Calu3 (cell line): ENCODE measurements at regions of chr12 and their contacts with region 1.

Region 1: GRCh38 chr12:126051611-126052107 is 986.4 kb downstream of the AACS start:
- DNase-seq: peak; percentile 74
- H3K4me3 Mint-ChIP-seq: peak overlapping the region; percentile 75
- H3K27ac Mint-ChIP-seq: peak overlapping the region; percentile 91
- H3K4me1 Mint-ChIP-seq: peaks cover 67% of the 10 kb centered on the region
- H3K27me3 Mint-ChIP-seq: no peaks in the 10 kb centered on the region
- CTCF ChIP-seq: peak; percentile 41

Region 2: DNA sequence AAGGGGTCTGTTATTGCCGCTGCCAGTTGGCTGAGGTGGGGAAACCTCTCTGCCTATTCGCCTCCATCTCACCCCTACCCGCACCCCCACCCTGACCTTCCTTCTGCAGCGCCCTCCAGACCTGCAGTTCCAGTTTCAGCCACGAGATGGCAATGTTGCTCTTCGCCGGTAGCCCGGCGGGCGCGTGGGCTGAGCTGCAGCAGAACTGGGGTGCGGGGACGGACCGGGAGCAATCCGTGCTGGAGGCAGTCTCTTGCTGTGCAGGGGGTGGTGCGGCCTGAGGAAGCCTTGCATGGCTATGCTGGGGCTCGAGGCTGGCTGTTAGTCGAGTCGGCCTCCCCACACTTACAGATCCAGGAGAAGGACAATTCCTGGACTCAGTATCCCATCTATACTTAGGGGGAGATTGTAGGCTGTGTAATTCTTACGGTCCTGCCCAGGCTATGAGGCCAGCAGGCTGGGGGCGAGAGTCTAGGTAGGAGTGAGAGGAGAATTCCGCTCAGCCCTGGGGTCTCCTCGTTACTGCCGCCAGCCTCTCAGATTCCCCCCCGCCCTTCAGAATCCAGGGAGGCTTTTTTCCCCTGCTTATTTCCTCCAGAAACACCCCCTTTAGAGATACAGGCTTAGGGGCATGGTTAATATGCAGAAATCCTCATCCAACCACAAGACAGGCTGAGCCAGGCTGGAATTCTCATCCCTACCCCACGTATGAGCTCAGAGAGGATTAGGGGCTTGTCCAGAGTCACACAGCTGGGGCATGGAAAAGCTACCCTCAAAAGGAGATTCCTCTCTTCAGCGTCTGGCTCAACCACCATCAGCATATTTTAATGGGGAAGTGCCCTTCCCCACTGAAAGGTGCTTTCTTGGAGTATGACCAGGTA is 868.2 kb before region 1 on chr12:
- CTCF ChIA-PET with region 1: interaction called, 6 read pairs
- intact Hi-C with region 1: loop called (anchors 10 kb)
- DNase-seq: peak; percentile 92
- H3K4me3 Mint-ChIP-seq: peak overlapping the region; percentile 25
- H3K27ac Mint-ChIP-seq: no peak overlapping the region
- H3K4me1 Mint-ChIP-seq: peaks cover 18% of the 10 kb centered on the region
- H3K27me3 Mint-ChIP-seq: peaks cover 55% of the 10 kb centered on the region
- CTCF ChIP-seq: peak; percentile 99

Region 3: GRCh38 chr12:125240717-125241116 is 810.9 kb before region 1 on chr12:
- CTCF ChIA-PET with region 1: no interaction called
- intact Hi-C with region 1: loop called (anchors 5 kb)
- DNase-seq: no peak
- H3K4me3 Mint-ChIP-seq: no peak overlapping the region
- H3K27ac Mint-ChIP-seq: no peak overlapping the region
- H3K4me1 Mint-ChIP-seq: no peaks in the 10 kb centered on the region
- H3K27me3 Mint-ChIP-seq: peaks cover 63% of the 10 kb centered on the region
- CTCF ChIP-seq: no peak

Region 4: DNA sequence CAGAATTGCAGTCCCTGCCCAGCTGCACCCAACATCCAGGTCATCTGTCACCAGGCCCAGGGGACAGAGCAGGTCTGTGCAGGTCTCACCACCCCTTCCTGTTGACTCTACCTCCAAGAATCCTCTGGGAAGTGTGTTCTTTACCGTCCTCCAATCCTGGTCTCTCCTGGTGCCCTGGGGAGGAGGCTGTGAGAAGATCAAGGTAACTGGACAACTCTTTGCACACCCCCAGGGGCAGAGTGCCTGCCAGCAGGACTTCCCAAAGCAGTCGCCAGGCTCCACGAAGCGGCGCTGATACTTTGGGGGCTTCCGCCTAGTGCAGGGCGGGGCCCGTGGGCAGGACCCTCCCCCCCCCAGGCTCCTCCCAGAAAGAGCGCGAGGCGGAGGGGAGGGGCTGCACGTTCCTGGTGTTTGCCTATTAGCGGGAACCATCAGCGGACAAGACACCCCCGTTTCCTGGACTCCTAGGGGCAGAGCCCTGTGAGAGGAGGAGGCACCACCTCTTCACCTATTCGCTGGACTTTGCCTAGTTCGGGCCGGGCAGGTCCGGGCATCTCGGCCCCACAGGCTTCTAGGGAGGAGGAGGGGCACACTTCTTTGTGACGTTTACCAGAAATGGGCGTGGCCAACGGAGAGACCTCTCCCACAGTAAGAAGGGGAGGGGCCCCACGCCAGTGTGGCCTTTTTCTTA is 68.4 kb before region 1 on chr12:
- CTCF ChIA-PET with region 1: interaction called, 4 read pairs
- intact Hi-C with region 1: loop called (anchors 1 kb)
- DNase-seq: peak; percentile 93
- H3K4me3 Mint-ChIP-seq: peak overlapping the region; percentile 87
- H3K27ac Mint-ChIP-seq: peak overlapping the region; percentile 84
- H3K4me1 Mint-ChIP-seq: peaks cover 21% of the 10 kb centered on the region
- H3K27me3 Mint-ChIP-seq: no peaks in the 10 kb centered on the region
- CTCF ChIP-seq: no peak

Region 5: DNA sequence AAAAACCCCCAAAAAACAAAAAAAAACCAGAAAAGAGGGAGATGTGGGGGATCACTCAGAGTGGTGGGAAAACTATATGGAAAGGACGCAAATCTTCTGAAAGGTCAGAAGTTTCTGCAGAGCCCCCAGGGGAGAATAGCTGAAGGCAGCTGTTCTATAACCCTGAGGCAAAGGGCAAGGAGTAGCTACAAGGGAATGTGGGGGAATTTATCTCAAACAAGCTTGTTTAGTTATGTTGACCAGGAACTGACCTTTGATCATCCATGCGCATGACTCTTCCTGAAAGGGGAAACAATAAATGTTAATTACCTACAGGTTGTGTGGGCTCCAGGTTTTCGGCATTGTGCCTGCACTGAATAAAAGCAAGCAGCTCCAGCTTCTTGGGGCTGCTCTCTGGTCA is 17.9 kb before region 1 on chr12:
- CTCF ChIA-PET with region 1: interaction called, 7 read pairs
- intact Hi-C with region 1: loop called (anchors 2 kb)
- DNase-seq: no peak
- H3K4me3 Mint-ChIP-seq: no peak overlapping the region
- H3K27ac Mint-ChIP-seq: peak overlapping the region; percentile 35
- H3K4me1 Mint-ChIP-seq: peaks cover 61% of the 10 kb centered on the region
- H3K27me3 Mint-ChIP-seq: no peaks in the 10 kb centered on the region
- CTCF ChIP-seq: no peak

Region 6: DNA sequence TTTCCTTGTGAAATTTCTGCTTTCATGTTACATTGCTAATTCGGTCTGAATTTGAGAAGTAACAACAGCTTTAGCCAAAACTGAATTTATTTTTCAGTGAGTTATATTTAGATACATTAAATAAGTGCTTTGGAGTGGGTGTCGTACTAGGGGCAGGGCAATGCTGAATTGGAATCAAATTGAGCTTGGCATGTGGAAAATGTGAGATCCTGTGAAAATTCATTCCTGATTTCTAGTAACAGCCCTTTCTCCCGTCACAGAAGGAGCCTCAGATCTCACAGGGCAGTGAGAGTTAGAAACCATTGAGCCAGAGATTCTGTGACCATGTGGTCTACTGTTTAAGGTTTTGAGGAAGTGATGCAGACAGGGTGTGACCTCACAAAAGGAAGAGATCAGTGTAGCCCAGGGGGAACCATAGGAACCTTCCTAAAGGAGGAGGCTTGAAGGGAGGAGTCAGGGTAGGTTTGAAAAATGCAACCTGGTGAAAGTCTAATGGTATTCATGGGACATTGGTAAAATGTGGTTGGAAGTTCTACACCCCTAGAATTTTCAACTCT is 150.4 kb after region 1 on chr12:
- CTCF ChIA-PET with region 1: no interaction called
- intact Hi-C with region 1: no loop called
- DNase-seq: no peak
- H3K4me3 Mint-ChIP-seq: no peak overlapping the region
- H3K27ac Mint-ChIP-seq: no peak overlapping the region
- H3K4me1 Mint-ChIP-seq: no peaks in the 10 kb centered on the region
- H3K27me3 Mint-ChIP-seq: peaks cover 9% of the 10 kb centered on the region
- CTCF ChIP-seq: no peak

Region 7: DNA sequence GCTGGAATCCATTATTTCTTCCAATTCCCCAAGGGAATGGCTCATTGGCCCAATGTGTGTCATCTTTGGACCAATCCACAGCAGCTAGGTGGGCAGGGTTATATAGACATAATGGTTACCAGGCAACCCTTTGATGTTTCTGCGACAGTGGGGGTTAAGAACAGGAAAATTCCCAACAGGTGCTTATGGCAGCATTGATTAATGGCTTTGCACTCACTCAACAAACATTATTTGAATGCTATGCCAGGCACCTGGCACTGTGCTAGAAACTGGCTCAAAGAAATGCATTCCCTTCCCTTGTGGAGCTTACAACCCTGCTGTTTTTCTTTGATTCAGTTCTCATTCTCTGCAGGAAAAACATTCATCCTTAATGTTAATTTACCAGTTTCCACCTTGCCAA is 234.5 kb after region 1 on chr12:
- CTCF ChIA-PET with region 1: no interaction called
- intact Hi-C with region 1: no loop called
- DNase-seq: no peak
- H3K4me3 Mint-ChIP-seq: no peak overlapping the region
- H3K27ac Mint-ChIP-seq: no peak overlapping the region
- H3K4me1 Mint-ChIP-seq: no peaks in the 10 kb centered on the region
- H3K27me3 Mint-ChIP-seq: no peaks in the 10 kb centered on the region
- CTCF ChIP-seq: no peak

Region 8: DNA sequence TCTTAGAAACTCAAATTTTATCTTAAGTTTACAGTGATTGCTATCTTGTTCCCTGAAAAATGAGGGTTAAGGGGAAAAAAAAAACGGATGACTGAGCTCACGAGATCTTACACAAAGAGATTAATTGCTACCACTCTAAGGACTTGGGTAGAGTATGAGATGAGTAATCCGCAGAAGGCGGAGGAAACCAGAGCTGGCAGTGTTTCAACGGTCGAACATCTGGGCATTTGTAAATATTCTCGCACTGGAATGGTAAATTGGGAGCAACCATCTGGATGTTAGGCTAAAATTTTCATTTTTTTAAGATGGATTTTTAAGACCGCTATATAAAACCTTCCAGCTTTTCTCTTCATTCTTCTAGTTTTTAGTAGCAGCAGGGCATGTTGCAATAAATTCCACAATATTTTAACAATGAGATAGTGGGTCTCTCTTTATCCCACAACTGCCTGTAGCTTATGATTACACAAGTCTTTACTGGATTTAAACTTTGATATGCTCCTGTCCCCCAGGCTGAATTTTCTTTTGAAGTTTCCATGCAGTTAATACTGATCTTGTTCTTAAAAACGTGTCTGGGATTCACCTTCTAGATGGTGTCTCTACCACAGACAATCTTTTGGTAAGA is 337.7 kb after region 1 on chr12:
- CTCF ChIA-PET with region 1: no interaction called
- intact Hi-C with region 1: no loop called
- DNase-seq: no peak
- H3K4me3 Mint-ChIP-seq: no peak overlapping the region
- H3K27ac Mint-ChIP-seq: no peak overlapping the region
- H3K4me1 Mint-ChIP-seq: no peaks in the 10 kb centered on the region
- H3K27me3 Mint-ChIP-seq: no peaks in the 10 kb centered on the region
- CTCF ChIP-seq: no peak

Region 9: GRCh38 chr12:126582231-126582630 is 530.6 kb after region 1 on chr12:
- CTCF ChIA-PET with region 1: no interaction called
- intact Hi-C with region 1: loop called (anchors 1 kb)
- DNase-seq: peak; percentile 58
- H3K4me3 Mint-ChIP-seq: no peak overlapping the region
- H3K27ac Mint-ChIP-seq: peak overlapping the region; percentile 42
- H3K4me1 Mint-ChIP-seq: no peaks in the 10 kb centered on the region
- H3K27me3 Mint-ChIP-seq: no peaks in the 10 kb centered on the region
- CTCF ChIP-seq: no peak

Region 10: DNA sequence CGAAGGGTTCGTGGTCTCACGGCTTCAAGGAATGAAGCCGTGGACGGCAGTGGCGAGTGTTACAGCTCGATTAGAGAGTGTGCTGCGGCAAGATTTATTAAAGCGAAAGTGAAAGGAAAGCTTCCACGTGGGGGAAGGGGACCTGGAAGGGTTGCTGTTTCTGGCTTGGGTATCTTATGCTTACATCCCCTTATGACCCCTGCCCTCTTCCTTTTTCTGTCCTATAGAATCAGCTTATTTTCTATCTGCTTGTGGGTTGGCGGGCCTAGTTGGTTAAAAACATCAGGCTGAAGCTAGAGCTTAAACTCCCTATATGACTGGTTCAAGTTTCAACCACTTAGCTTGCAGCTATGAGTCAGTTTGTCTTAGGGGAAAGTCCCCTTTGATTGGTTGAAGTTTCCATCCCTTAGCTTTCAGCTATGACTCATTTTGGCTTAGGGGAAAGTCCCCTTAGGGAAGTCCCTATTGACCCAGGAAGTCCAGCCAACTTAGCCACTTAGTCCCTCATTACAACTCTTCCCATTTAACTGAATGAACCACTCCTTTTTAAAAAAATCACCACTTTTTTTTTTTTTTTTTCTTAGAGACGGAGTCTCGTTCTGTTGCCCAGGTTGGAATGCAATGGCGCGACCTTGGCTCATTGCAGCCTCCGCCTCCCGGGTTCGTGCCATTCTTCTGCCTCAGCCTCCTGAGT is 720.7 kb after region 1 on chr12:
- CTCF ChIA-PET with region 1: no interaction called
- intact Hi-C with region 1: loop called (anchors 5 kb)
- DNase-seq: peak; percentile 69
- H3K4me3 Mint-ChIP-seq: peak overlapping the region; percentile 83
- H3K27ac Mint-ChIP-seq: peak overlapping the region; percentile 98
- H3K4me1 Mint-ChIP-seq: peaks cover 36% of the 10 kb centered on the region
- H3K27me3 Mint-ChIP-seq: no peaks in the 10 kb centered on the region
- CTCF ChIP-seq: no peak